ENCODE measurements at regions of chr1 and their contacts with region 1.

Region 1: GRCh38 chr1:28088168-28088961 is at the start of gene EYA3:
- DNase-seq: peak; percentile 87 to 99
- H3K4me3 ChIP-seq: peak within 1 kb of the TSS; percentile 67
- H3K27ac ChIP-seq: peak within 1 kb of the TSS; percentile 67
- H3K4me1 ChIP-seq: peaks cover 11% of the 10 kb centered on the region
- H3K27me3 ChIP-seq: no peaks in the 10 kb centered on the region
- CTCF ChIP-seq: no peak
- total RNA-seq, gene EYA3: 9.6 and 19.0 TPM in 2 replicates

Region 2: GRCh38 chr1:27858072-27858958 is 230.1 kb before region 1 on chr1:
- CTCF ChIA-PET with region 1: no interaction called
- POLR2A ChIA-PET with region 1: no interaction called
- intact Hi-C with region 1: loop called (anchors 5 kb)
- DNase-seq: peak; percentile 58 to 80
- H3K4me3 ChIP-seq: no peak overlapping the region
- H3K27ac ChIP-seq: no peak overlapping the region
- H3K4me1 ChIP-seq: peaks cover 9% of the 10 kb centered on the region
- H3K27me3 ChIP-seq: no peaks in the 10 kb centered on the region
- CTCF ChIP-seq: peak; percentile 91

Region 3: DNA sequence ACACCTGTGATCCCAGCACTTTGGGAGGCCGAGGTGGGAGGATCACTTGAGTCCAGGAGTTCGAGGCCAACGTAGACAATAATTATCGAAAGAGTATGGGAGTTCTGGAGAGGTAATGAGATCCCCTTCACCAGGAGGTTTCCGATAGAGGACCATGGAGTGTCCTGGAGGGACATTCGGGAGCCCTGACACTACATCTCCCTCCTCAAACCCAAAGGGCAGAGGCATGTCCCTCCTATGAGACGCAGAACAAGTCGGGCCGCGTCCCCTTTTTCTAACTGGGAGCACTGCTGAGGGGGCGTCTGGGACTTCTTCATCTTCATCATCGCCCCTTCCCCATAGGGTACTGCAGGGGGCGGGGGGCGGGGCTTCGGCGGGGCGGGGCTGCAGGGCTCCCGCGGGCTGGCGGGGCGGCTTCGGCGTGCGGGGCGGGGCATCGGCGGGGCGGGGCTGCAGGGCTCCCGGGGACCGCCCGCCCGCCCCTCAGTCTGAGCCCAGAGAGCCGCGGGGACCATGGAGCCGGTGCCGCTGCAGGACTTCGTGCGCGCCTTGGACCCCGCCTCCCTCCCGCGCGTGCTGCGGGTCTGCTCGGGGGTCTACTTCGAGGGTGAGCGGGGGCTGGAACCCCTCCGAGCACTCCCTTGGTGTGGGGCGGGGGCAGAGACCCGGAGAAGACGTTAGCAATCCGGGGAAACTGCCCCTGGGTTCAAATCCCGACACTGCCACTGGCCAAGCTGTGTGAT is 216.1 kb before region 1 on chr1 and contains the start of gene THEMIS2:
- CTCF ChIA-PET with region 1: no interaction called
- POLR2A ChIA-PET with region 1: interaction called, 10 read pairs
- intact Hi-C with region 1: no loop called
- DNase-seq: peak in 1 of 2 experiments; percentile 53
- H3K4me3 ChIP-seq: peak within 1 kb of the TSS; percentile 54; the same call in 1 of the 2 replicates
- H3K27ac ChIP-seq: no peak within 1 kb of the TSS
- H3K4me1 ChIP-seq: no peaks in the 10 kb centered on the region; the same call in 1 of the 2 replicates
- H3K27me3 ChIP-seq: no peaks in the 10 kb centered on the region
- CTCF ChIP-seq: no peak
- total RNA-seq, gene THEMIS2: 3.1 and 10.7 TPM in 2 replicates

Region 4: DNA sequence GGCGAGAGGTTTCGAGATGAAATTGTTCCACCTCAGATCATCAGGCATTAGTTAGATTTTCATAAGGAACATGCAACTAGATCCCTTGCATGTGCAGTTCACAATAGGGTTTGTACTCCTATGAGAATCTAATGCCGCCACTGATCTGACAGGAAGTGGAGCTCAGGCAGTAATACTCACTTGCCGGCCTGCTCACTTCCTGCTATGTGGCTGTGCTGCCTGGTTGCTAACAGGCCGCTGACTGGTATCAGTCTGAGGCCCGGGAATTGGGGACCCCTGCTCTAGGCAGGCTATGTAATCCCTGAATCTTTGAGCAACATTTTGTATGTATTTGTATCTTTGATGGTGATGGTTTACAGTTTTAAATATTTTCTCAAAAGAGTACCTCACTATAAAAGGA is 96.1 kb before region 1 on chr1:
- CTCF ChIA-PET with region 1: no interaction called
- POLR2A ChIA-PET with region 1: no interaction called
- intact Hi-C with region 1: no loop called
- DNase-seq: no peak
- H3K4me3 ChIP-seq: no peak overlapping the region
- H3K27ac ChIP-seq: no peak overlapping the region
- H3K4me1 ChIP-seq: no peaks in the 10 kb centered on the region
- H3K27me3 ChIP-seq: no peaks in the 10 kb centered on the region
- CTCF ChIP-seq: no peak

Region 5: GRCh38 chr1:28114844-28115243 is 26.5 kb after region 1 on chr1:
- CTCF ChIA-PET with region 1: interaction called, 10 read pairs
- POLR2A ChIA-PET with region 1: no interaction called
- intact Hi-C with region 1: no loop called
- DNase-seq: no peak
- H3K4me3 ChIP-seq: no peak overlapping the region
- H3K27ac ChIP-seq: peak overlapping the region; percentile 29; the same call in 1 of the 2 replicates
- H3K4me1 ChIP-seq: peaks cover 30% of the 10 kb centered on the region
- H3K27me3 ChIP-seq: no peaks in the 10 kb centered on the region
- CTCF ChIP-seq: no peak

Region 6: DNA sequence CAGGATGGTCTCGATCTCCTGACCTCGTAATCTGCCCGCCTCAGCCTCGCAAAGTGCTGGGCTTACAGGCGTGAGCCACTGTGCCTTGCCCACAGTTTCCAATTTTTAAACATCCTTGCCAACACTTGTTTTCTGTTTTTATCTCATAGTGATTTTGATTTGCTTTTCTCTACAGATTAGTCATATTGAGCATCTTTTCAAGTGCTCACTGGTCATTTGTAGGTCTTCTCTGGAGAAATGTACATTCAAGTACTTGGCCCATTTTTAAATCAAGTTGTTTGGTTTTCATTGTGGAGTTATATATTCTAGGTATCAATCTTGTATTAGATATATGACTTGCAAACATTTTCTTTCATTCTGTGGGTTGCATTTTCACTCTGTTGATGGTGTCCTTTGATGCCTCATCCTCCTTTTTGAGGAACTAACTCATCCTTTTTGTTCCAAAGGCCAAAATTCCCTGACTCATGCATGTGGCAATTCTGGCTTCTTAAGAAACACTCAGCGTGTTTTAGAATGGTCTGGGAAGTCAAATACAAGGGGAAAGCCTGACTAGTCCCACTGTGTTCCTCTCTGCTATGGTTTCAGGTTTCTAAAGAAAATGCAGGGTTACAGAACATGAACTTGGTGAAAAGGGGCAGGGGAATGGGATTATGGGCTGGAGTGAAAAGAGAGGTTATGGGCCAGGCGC is 50.8 kb after region 1 on chr1:
- CTCF ChIA-PET with region 1: interaction called, 10 read pairs
- POLR2A ChIA-PET with region 1: no interaction called
- intact Hi-C with region 1: loop called (anchors 5 kb)
- DNase-seq: peak in 1 of 2 experiments; percentile 45
- H3K4me3 ChIP-seq: no peak overlapping the region
- H3K27ac ChIP-seq: peak overlapping the region; percentile 26; the same call in 1 of the 2 replicates
- H3K4me1 ChIP-seq: peaks cover 42% of the 10 kb centered on the region
- H3K27me3 ChIP-seq: no peaks in the 10 kb centered on the region
- CTCF ChIP-seq: no peak

Region 7: GRCh38 chr1:28190996-28191645 is 102.8 kb after region 1 on chr1:
- CTCF ChIA-PET with region 1: interaction called, 3 read pairs
- POLR2A ChIA-PET with region 1: no interaction called
- intact Hi-C with region 1: loop called (anchors 2 kb)
- DNase-seq: no peak
- H3K4me3 ChIP-seq: peak overlapping the region; percentile 10; the same call in 1 of the 2 replicates
- H3K27ac ChIP-seq: peak overlapping the region; percentile 80
- H3K4me1 ChIP-seq: peaks cover 37% of the 10 kb centered on the region
- H3K27me3 ChIP-seq: no peaks in the 10 kb centered on the region
- CTCF ChIP-seq: no peak

Region 8: GRCh38 chr1:28208818-28209441 is 120.6 kb after region 1 on chr1:
- CTCF ChIA-PET with region 1: interaction called, 4 read pairs
- POLR2A ChIA-PET with region 1: no interaction called
- intact Hi-C with region 1: loop called (anchors 1 kb)
- DNase-seq: peak; percentile 41 to 49
- H3K4me3 ChIP-seq: no peak overlapping the region
- H3K27ac ChIP-seq: no peak overlapping the region
- H3K4me1 ChIP-seq: no peaks in the 10 kb centered on the region
- H3K27me3 ChIP-seq: no peaks in the 10 kb centered on the region
- CTCF ChIP-seq: peak; percentile 76

Region 9: DNA sequence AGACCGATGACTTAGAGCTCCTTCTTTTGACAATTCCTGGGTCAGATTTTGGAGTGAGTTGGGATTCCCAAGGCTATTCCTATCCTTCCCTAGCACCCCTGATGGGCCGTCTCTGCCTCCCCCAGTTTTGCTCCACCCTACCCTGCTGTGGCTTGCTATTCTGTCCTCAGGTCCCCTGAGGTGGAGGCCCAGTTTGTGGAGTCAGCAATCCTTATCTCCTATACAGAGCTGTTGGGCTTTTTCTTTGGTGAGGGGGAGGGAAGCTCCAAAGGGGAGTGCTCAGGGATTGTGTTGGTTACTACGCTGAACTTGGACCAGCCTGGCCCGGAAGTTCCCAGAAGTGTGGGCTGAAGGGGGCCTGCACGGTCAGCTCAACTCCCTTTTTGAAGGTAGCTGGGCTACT is 178.6 kb after region 1 on chr1:
- CTCF ChIA-PET with region 1: no interaction called
- POLR2A ChIA-PET with region 1: no interaction called
- intact Hi-C with region 1: no loop called
- DNase-seq: no peak
- H3K4me3 ChIP-seq: no peak overlapping the region
- H3K27ac ChIP-seq: no peak overlapping the region
- H3K4me1 ChIP-seq: peaks cover 4% of the 10 kb centered on the region; the same call in 1 of the 2 replicates
- H3K27me3 ChIP-seq: no peaks in the 10 kb centered on the region
- CTCF ChIP-seq: no peak